Vagina (tissue), 2 donors: ENCODE measurements at regions of chr7 and their contacts with region 1.

Region 1: GRCh38 chr7:28921822-28922221 is 36.3 kb downstream of the TRIL start:
- DNase-seq: no peak
- H3K4me3 ChIP-seq: no peak overlapping the region
- H3K27ac ChIP-seq: no peak overlapping the region
- H3K4me1 ChIP-seq: no peaks in the 10 kb centered on the region
- H3K27me3 ChIP-seq: no peaks in the 10 kb centered on the region
- CTCF ChIP-seq: peak; percentile 77 to 96 (median 90)
- POLR2A ChIP-seq: no peak

Region 2: GRCh38 chr7:29408841-29409243 is 487.0 kb after region 1 on chr7:
- intact Hi-C with region 1: loop called (anchors 5 kb)
- DNase-seq: no peak
- H3K4me3 ChIP-seq: no peak overlapping the region
- H3K27ac ChIP-seq: no peak overlapping the region
- H3K4me1 ChIP-seq: peaks cover 6% of the 10 kb centered on the region
- H3K27me3 ChIP-seq: no peaks in the 10 kb centered on the region
- CTCF ChIP-seq: peak in 2 of 3 experiments; percentile 76 to 87
- POLR2A ChIP-seq: no peak